ENCODE measurements at regions of chr19 and their contacts with region 1.

Region 1: DNA sequence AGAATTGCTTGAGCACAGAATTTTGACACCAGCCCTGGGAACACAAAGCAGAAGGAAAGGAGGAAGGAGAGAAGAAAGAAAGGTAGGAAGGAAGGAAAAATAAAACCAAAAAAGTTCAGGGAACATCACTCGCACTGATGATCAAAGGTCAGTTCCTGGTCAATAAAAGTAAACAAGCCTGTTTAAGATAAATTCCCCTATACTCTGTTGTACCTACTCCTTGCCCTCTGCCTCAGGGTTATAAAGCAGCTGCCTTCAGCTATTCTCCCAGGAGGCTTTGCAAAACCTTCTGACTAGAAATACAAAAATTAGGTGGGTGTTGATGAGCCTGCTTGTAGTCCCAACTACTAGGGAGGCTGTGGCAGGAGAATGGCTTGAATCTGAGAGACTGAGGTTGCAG is 14.9 kb upstream of the ZNF91 start:
- DNase-seq: no peak
- H3K4me3 ChIP-seq: no peak overlapping the region
- H3K27ac ChIP-seq: no peak overlapping the region
- H3K4me1 ChIP-seq: no peaks in the 10 kb centered on the region
- H3K27me3 ChIP-seq: no peaks in the 10 kb centered on the region
- CTCF ChIP-seq: no peak

Region 2: DNA sequence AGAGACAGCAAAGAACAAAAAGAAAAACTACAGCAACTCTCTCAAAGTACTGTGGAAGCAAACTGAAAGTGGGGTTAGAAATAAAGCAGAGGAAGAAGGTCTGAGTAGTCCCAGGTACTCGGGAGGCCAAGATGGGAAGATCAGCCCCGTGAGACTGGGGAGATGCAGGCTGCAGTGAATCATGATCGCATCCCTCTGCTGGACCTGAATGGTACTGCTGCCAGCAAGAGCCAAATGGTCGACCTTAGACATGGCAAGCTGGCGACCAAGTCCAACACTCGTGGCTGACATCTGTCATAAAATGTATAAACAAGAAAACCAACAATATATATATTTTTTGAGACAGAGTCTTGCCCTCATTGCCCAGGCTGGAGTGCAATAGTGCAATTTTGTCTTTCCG is 126.2 kb before region 1 on chr19:
- CTCF ChIA-PET with region 1: no interaction called
- POLR2A ChIA-PET with region 1: interaction called, 12 read pairs
- intact Hi-C with region 1: no loop called
- DNase-seq: peak in 1 of 2 experiments; percentile 47
- H3K4me3 ChIP-seq: no peak overlapping the region
- H3K27ac ChIP-seq: no peak overlapping the region
- H3K4me1 ChIP-seq: no peaks in the 10 kb centered on the region
- H3K27me3 ChIP-seq: no peaks in the 10 kb centered on the region
- CTCF ChIP-seq: peak; percentile 73

Region 3: DNA sequence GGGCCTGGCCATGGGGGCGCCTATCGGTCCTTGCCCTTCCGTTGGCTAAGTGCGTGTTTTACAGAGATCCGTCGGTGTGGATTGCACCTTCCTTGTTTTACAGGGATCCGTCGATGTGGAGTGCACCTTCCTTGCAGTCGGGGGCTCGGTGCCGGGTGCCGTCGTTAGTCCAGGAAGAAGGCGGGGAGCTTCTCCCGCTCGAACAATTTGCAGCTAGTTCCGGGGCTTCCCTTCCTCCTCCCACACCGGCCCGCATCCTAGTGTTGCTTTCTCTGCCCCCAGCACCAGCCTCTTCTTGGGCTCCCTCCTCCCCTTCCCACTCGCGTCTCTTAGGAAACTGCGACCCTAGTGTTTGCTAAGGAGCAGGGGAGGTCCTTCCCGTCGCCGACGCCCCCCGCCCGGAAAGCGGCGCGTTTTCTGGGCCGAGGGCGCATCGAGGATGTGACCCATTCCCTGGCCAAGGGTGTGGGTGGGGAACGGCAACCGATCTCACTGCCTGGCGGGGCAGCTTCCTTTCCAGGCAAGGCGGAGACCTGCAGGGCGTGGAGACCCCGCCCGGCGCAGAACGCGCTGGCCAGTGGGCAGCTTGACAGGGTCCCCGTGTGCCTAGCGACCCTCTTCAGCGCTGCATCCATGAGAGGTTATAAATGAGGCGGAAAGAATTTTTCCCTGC is 60.9 kb after region 1 on chr19:
- CTCF ChIA-PET with region 1: no interaction called
- POLR2A ChIA-PET with region 1: no interaction called
- intact Hi-C with region 1: no loop called
- DNase-seq: no peak
- H3K4me3 ChIP-seq: no peak overlapping the region
- H3K27ac ChIP-seq: no peak overlapping the region
- H3K4me1 ChIP-seq: no peaks in the 10 kb centered on the region
- H3K27me3 ChIP-seq: peaks cover 34% of the 10 kb centered on the region
- CTCF ChIP-seq: no peak